Panc1 (cell line): ENCODE measurements at regions of chr19 and their contacts with region 1.

Region 1: GRCh38 chr19:13162518-13163314 is 12.5 kb downstream of the IER2 start:
- DNase-seq: no peak
- ATAC-seq: peak; percentile 74
- H3K4me3 ChIP-seq: peak overlapping the region; percentile 42 to 54
- H3K27ac ChIP-seq: peak overlapping the region; percentile 99
- H3K4me1 ChIP-seq: peaks cover 56% of the 10 kb centered on the region
- H3K27me3 ChIP-seq: no peaks in the 10 kb centered on the region
- CTCF ChIP-seq: no peak

Region 2: DNA sequence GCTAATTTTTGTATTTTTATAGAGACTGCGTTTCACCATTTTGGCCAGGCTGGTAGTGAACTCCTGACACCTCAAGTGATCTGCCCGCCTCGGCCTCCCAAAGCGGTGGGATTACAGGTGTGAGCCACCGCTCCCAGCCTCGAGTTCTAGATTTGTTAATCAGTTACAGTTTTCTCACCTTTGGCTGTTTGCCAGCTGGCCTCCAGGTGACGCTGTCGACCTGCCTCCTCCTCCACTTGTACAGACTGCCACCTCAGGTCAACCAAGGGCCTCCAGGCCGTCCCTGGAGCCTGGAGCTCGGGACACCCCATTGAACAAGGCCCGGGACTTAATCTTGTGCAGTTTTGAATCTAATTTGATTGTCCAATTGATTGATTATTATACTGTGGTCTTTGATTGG is 33.0 kb after region 1 on chr19:
- CTCF ChIA-PET with region 1: interaction called, 13 read pairs
- POLR2A ChIA-PET with region 1: interaction called, 8 read pairs
- in situ Hi-C with region 1: no loop called
- intact Hi-C with region 1: no loop called
- DNase-seq: no peak
- ATAC-seq: no peak
- H3K4me3 ChIP-seq: no peak overlapping the region
- H3K27ac ChIP-seq: no peak overlapping the region
- H3K4me1 ChIP-seq: no peaks in the 10 kb centered on the region
- H3K27me3 ChIP-seq: no peaks in the 10 kb centered on the region
- CTCF ChIP-seq: no peak